GM10248 (cell line): ENCODE measurements at regions of chr2 and their contacts with region 1.

Region 1: DNA sequence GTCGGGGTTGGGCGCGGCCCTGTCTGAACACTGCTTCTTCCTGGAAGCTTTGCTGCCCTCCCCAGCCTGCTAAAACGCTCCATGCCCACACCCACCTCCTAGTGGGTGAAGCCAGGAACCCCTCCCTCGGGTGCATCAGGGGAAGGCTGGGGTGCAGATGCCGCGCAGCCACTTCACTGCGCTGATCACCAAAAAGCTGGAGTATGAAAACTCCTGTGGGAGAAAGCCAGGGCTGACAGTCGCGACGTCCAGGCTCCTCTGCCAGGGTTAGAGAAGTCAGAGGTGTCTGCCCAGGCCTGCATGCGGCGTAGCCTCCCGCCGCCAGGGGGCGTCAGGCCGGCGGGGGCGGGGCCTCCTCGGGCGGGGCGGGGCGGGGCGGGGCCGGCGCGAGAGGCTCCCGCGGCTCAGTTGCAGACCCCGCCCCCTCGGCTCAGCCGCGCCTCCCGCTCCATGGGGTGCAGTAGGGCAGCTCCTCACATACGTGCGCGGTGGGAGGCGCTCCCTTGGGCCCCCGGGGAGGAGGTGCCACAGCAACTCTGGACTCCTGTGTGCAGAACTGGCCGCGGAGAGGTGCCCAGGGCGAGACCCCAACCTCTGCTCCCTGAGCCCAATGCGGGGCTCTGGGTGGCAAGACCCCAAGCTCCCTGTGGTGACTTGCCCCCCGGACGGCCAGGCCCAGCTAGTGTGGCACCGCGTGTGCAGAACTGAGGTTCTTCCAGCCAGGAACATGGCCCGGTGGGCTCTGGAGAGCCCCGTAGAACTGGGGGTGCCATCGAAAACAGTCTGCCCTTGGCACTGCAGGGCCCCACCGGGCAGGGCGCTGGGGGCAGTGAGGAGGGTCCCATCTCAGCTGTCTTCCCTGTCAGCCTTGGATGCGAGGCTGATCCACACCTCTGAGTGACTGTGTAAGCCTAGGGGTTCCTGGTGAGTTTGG is 1.8 kb upstream of the RNPEPL1 start:
- DNase-seq: peak; percentile 92
- CTCF ChIP-seq: peak; percentile 76

Region 2: GRCh38 chr2:240551809-240552208 is 14.7 kb before region 1 on chr2:
- CTCF ChIA-PET with region 1: interaction called, 15 read pairs
- POLR2A ChIA-PET with region 1: interaction called, 3 read pairs
- DNase-seq: no peak
- CTCF ChIP-seq: no peak

Region 3: GRCh38 chr2:240579771-240580614 is 13.5 kb after region 1 on chr2:
- CTCF ChIA-PET with region 1: interaction called, 167 read pairs
- POLR2A ChIA-PET with region 1: interaction called, 34 read pairs
- DNase-seq: peak; percentile 76
- CTCF ChIP-seq: peak; percentile 34

Region 4: GRCh38 chr2:240586198-240586918 is 19.9 kb after region 1 on chr2 and contains the start of gene CAPN10:
- CTCF ChIA-PET with region 1: interaction called, 167 read pairs
- POLR2A ChIA-PET with region 1: interaction called, 34 read pairs
- DNase-seq: peak; percentile 95
- CTCF ChIP-seq: no peak

Region 5: GRCh38 chr2:240622531-240623235 is 56.2 kb after region 1 on chr2:
- CTCF ChIA-PET with region 1: interaction called, 11 read pairs
- POLR2A ChIA-PET with region 1: interaction called, 6 read pairs
- DNase-seq: no peak
- CTCF ChIP-seq: no peak